Dendritic cell treated with granulocyte-macrophage colony-stimulating factor and Interleukin-4, amounts not matched to agents 40 ng/mL and 50 ng/mL, for 4 days (primary cell): ENCODE measurements at regions of chr3 and their contacts with region 1.

Region 1: DNA sequence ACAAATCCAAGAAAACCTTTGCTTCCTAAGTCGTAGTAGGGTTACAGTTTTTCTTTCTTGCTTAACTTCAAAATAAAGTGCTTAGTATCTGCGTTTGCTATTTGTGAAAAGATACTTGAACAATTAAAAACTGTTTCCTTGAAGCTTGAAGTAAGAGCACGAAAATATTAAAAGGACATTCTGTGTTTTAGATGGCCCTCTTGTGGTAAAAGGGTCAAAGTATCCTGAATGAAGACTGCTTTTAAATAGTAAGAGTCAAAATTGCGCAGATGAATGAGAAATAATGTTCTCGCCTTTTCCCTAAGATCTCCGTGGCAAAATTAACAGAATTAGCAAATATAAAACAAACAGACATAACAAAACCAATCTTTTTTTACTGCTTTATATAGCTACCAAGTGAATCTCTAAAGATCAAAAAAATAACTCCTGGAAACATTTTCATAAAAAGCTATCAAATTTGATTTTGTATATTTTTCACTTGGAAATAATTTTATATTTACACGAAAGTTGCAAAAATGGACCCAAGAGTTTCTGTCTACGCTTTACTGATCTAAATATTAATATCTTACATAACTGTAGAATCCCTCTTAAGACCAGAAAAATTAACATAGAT is 175.4 kb downstream of the MBNL1 start:
- H3K4me3 Mint-ChIP-seq: no peak overlapping the region
- H3K27ac Mint-ChIP-seq: no peak overlapping the region
- H3K4me1 Mint-ChIP-seq: peaks cover 18% of the 10 kb centered on the region
- H3K27me3 Mint-ChIP-seq: no peaks in the 10 kb centered on the region

Region 2: DNA sequence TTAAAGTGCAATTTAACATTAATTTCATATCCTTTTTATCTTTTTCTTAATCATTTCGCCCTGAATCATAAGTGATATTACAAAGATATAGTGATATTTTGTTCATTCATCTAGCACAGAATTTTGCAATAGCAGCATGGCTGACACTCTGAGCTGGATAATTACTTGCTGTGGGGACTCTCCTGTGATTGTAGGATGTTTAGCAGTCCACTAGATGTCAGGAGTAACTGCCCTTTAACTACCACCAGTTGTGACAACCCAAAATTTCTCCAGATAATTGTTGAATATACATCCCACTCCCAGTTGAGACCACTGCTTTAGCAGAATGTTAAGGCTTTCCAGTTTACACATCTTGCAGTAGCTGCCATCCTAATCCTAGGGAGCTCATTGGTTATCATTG is 372.2 kb before region 1 on chr3:
- intact Hi-C with region 1: loop called (anchors 5 kb)
- H3K4me3 Mint-ChIP-seq: no peak overlapping the region
- H3K27ac Mint-ChIP-seq: no peak overlapping the region
- H3K4me1 Mint-ChIP-seq: no peaks in the 10 kb centered on the region
- H3K27me3 Mint-ChIP-seq: no peaks in the 10 kb centered on the region

Region 3: GRCh38 chr3:152183473-152183872 is 260.7 kb before region 1 on chr3:
- intact Hi-C with region 1: loop called (anchors 5 kb)
- H3K4me3 Mint-ChIP-seq: no peak overlapping the region
- H3K27ac Mint-ChIP-seq: no peak overlapping the region
- H3K4me1 Mint-ChIP-seq: peaks cover 35% of the 10 kb centered on the region
- H3K27me3 Mint-ChIP-seq: no peaks in the 10 kb centered on the region